Activated CD4-positive, alpha-beta T cell treated with anti-CD3 and anti-CD28 coated beads for 36 hours (primary cell): ENCODE measurements at regions of chr6 and their contacts with region 1.

Region 1: GRCh38 chr6:32195652-32195901 is 3.1 kb upstream of the GPSM3 start:
- DNase-seq: peak; percentile 100
- ATAC-seq: peak; percentile 90
- H3K4me3 Mint-ChIP-seq: peak overlapping the region; percentile 94
- H3K27ac Mint-ChIP-seq: peak overlapping the region; percentile 90
- H3K4me1 Mint-ChIP-seq: peaks cover 32% of the 10 kb centered on the region
- H3K27me3 Mint-ChIP-seq: no peaks in the 10 kb centered on the region

Region 2: DNA sequence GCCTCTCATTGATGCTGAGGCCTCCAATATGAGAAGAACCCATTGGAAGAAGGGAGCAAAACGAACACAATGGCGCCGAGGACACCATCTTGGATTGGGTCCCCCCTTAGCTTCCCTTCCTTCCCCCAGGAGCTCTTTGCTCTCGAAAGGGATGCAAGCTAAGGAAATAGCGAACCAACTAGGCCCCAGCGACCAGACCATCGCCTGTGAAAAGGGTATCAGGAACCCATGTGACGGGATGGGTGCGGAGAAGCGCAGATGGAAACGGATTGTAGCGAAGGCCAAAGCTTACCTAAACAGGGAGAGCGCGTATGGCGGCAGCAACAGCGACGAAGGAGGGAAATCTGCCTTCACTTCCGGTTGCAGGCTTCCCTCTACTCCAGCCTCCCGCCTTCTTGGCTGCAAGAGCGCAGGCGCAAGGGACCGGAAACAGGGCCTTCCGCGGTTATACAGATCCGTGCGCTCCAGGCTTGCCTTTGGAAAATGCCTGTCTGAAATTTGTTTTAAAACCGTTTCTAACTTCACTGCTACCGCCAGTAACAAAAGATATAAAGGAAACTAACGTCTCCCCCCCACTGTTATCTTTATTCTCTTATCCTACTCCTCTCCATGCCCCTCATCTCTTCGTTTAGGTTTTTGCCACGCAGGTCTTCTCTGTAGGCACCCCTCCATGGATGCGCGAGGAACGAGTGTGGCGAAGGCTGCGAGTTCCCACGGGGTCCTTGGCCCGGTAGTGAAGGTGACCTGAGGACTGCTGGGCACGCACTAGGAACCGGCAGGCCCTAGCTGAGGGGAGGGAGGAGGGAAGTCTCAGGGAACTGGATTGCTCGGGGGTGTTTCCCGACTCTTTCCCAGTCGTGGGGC is 653.7 kb before region 1 on chr6 and contains the start of gene DDX39B:
- CTCF ChIA-PET with region 1: no interaction called
- POLR2A ChIA-PET with region 1: interaction called, 4 read pairs
- intact Hi-C with region 1: loop called in 1 of 2 experiments (anchors 5 kb)
- DNase-seq: peak; percentile 96
- ATAC-seq: peak; percentile 77
- H3K4me3 Mint-ChIP-seq: peak within 1 kb of the TSS; percentile 79
- H3K27ac Mint-ChIP-seq: peak within 1 kb of the TSS; percentile 92
- H3K4me1 Mint-ChIP-seq: peaks cover 50% of the 10 kb centered on the region
- H3K27me3 Mint-ChIP-seq: no peaks in the 10 kb centered on the region
- total RNA-seq, gene DDX39B: 517 to 569 TPM

Region 3: DNA sequence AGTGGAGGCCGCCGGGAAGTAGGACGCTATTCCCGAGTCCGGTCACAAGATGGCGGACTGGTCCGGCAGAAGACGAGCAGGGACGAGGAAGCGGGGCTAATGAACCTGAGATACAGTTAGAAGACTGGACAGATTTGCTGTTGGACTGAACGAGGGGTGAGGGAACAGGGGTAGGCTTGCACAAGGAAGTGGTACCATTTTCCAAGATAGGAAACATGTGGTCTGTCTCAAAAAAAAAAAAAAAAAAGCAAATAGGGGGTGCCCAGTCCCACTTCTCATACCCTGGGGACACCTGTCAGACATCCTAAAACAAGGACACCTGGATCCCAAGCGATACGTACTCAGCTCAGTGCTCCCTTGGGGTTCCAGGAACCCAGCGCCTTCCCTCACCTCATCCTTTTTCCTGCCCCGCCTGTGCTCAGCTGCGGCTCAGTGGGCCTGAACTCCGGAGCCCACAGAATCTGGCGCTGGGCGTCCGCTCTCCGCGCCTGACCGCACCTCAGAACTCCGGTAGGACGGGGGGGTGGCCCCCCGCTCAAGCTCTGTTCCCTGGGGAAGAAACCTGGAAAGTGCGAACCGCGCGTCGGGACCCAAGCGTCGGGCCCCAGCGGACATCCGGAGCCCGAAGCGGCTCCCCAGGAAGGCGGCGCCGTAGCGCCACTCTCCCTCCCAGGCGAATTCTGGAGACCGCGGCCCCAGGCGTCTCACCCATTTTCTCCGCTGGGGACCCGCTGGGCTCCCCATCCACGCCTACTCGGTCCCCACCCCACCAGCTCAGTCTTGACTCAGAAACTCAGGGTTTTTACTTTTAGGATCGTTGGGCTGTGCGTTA is 514.5 kb before region 1 on chr6 and contains the start of gene LY6G5C:
- CTCF ChIA-PET with region 1: no interaction called
- POLR2A ChIA-PET with region 1: no interaction called
- intact Hi-C with region 1: no loop called
- DNase-seq: peak; percentile 80
- ATAC-seq: peak; percentile 80
- H3K4me3 Mint-ChIP-seq: peak within 1 kb of the TSS; percentile 66
- H3K27ac Mint-ChIP-seq: peak within 1 kb of the TSS; percentile 49
- H3K4me1 Mint-ChIP-seq: peaks cover 15% of the 10 kb centered on the region
- H3K27me3 Mint-ChIP-seq: no peaks in the 10 kb centered on the region
- total RNA-seq, gene LY6G5C: 1.2 to 1.5 TPM

Region 4: DNA sequence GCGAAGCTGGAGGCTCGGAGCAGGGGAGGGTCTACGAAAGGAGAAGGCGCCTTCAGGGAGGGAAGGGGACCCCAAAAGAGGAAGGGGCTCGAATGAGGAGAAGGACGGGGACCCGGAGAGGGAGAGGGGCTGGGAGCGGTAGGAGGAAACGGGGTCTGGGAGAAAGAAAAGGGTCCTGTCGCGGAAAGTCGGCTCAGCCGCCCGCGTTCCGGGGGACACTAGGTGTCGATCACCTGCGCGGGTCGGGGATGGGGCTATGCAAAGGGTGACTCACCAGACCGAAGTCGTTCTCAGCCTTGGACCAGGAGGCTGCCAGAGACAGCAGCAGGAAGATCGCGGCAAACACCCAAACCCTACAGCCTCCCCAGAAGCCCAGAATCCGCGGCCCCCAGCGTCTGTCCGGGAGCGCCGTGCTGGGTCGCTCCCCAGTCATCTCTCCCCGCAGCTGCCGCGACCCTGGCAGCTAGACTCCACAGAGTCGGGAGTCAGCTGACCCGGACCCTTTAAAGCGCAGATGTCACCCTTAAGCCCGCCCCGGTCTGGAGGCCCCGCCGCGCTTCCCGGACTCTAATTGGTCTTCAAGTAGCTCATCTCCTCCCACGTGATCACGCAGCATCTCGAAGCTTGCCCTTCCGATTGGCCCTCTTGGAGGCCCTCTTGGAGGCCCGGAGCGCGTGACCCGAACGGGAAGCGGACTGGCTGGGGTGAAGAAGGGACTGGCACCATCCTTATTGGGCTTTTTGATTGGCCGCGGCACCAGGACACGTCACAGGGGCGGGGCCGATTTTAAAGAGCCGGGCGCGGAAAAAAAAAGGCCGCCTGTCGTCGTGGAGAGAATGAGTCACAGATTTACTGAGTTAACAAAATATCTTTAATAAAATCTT is 333.0 kb before region 1 on chr6 and contains the start of gene NEU1:
- CTCF ChIA-PET with region 1: no interaction called
- POLR2A ChIA-PET with region 1: no interaction called
- intact Hi-C with region 1: loop called in 1 of 2 experiments (anchors 1 kb)
- DNase-seq: peak; percentile 100
- ATAC-seq: peak; percentile 98
- H3K4me3 Mint-ChIP-seq: peak within 1 kb of the TSS; percentile 90
- H3K27ac Mint-ChIP-seq: peak within 1 kb of the TSS; percentile 91
- H3K4me1 Mint-ChIP-seq: peaks cover 27% of the 10 kb centered on the region
- H3K27me3 Mint-ChIP-seq: no peaks in the 10 kb centered on the region
- total RNA-seq, gene NEU1: 11.6 to 11.8 TPM

Region 5: DNA sequence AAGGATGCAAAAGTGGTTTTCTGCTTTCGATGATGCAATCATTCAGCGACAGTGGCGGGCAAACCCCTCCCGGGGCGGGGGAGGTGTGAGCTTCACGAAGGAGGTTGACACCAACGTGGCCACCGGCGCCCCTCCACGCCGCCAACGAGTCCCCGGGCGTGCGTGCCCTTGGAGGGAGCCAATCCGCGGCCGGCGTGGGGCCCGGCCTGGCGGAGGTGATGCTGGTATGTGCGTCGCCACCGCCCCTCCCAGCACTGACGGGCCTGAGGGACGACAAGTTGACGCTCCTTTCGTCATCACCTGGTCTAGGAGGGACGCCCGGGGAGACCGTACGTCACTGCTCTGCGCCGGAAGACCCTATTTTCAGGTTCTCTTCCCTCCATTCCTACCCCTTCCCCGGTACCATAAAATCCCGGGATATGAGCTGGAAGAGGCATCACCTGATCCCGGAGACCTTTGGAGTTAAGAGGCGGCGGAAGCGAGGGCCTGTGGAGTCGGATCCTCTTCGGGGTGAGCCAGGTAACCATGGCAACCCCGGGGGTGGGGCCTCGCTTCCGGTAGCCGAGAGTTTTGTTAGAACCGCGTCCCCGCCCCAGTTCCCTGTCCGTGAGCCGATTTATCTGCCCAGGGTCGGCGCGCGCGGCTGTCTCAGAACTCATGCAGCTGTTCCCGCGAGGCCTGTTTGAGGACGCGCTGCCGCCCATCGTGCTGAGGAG is 223.4 kb before region 1 on chr6 and contains the start of gene DXO:
- CTCF ChIA-PET with region 1: interaction called, 3 read pairs
- POLR2A ChIA-PET with region 1: no interaction called
- intact Hi-C with region 1: loop called (anchors 1 to 10 kb)
- DNase-seq: peak; percentile 99
- ATAC-seq: peak; percentile 96
- H3K4me3 Mint-ChIP-seq: peak within 1 kb of the TSS; percentile 96
- H3K27ac Mint-ChIP-seq: peak within 1 kb of the TSS; percentile 99
- H3K4me1 Mint-ChIP-seq: peaks cover 43% of the 10 kb centered on the region
- H3K27me3 Mint-ChIP-seq: no peaks in the 10 kb centered on the region
- total RNA-seq, gene DXO: 12.6 to 13.9 TPM

Region 6: GRCh38 chr6:32153564-32154513 is 41.7 kb before region 1 on chr6 and contains the start of gene PPT2:
- CTCF ChIA-PET with region 1: interaction called, 6 read pairs
- POLR2A ChIA-PET with region 1: no interaction called
- intact Hi-C with region 1: loop called (anchors 1 kb)
- DNase-seq: peak; percentile 88
- ATAC-seq: peak; percentile 76
- H3K4me3 Mint-ChIP-seq: peak within 1 kb of the TSS; percentile 91
- H3K27ac Mint-ChIP-seq: peak within 1 kb of the TSS; percentile 92
- H3K4me1 Mint-ChIP-seq: peaks cover 45% of the 10 kb centered on the region
- H3K27me3 Mint-ChIP-seq: peaks cover 11% of the 10 kb centered on the region
- total RNA-seq, gene PPT2: 9.9 to 10.1 TPM

Region 7: GRCh38 chr6:32838114-32838958 is 642.8 kb after region 1 on chr6 and contains the start of gene TAP2:
- CTCF ChIA-PET with region 1: interaction called, 3 read pairs
- POLR2A ChIA-PET with region 1: no interaction called
- intact Hi-C with region 1: loop called in 1 of 2 experiments (anchors 2 kb)
- DNase-seq: peak; percentile 99
- ATAC-seq: peak; percentile 82
- H3K4me3 Mint-ChIP-seq: peak within 1 kb of the TSS; percentile 95
- H3K27ac Mint-ChIP-seq: peak within 1 kb of the TSS; percentile 94
- H3K4me1 Mint-ChIP-seq: peaks cover 79% of the 10 kb centered on the region
- H3K27me3 Mint-ChIP-seq: no peaks in the 10 kb centered on the region
- total RNA-seq, gene TAP2: 96.4 to 150 TPM

Region 8: DNA sequence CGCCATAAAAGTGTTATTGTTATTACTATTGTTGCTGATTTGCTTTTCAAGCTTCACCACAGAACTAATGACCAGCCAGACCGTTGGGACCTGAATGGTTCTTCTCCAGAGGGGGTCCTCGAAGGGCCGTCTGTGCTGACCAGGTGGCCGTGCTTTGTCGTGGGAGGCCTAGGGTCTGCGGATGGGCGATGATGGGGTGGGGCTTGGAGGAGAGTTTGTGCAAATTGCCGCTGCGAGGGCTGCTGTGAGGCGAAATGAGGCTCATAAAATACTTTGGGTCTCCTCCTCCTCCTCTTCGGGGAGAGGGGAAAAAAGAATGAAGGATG is 1128.0 kb after region 1 on chr6:
- CTCF ChIA-PET with region 1: no interaction called
- POLR2A ChIA-PET with region 1: no interaction called
- intact Hi-C with region 1: loop called in 1 of 2 experiments (anchors 1 kb)
- DNase-seq: no peak
- ATAC-seq: no peak
- H3K4me3 Mint-ChIP-seq: peak overlapping the region; percentile 99
- H3K27ac Mint-ChIP-seq: peak overlapping the region; percentile 99
- H3K4me1 Mint-ChIP-seq: peaks cover 46% of the 10 kb centered on the region
- H3K27me3 Mint-ChIP-seq: no peaks in the 10 kb centered on the region